CD4-positive, alpha-beta T cell (primary cell): ENCODE measurements at regions of chr3 and their contacts with region 1.

Region 1: GRCh38 chr3:66500576-66501482 is at the start of gene LRIG1:
- DNase-seq: peak; percentile 94 to 99 (median 98)
- ATAC-seq: peak; percentile 92
- H3K4me3 ChIP-seq: peak within 1 kb of the TSS; percentile 79
- H3K4me3 Mint-ChIP-seq: peak within 1 kb of the TSS; percentile 97
- H3K27ac ChIP-seq: peak within 1 kb of the TSS in 1 of 2 donors; percentile 11
- H3K27ac Mint-ChIP-seq: peak within 1 kb of the TSS; percentile 80
- H3K4me1 ChIP-seq: peaks cover 40% of the 10 kb centered on the region
- H3K4me1 Mint-ChIP-seq: peaks cover 69% of the 10 kb centered on the region
- H3K27me3 ChIP-seq: no peaks in the 10 kb centered on the region
- H3K27me3 Mint-ChIP-seq: no peaks in the 10 kb centered on the region
- CTCF ChIP-seq: peak; percentile 23
- total RNA-seq, gene LRIG1: 30.1 to 33.1 TPM

Region 2: GRCh38 chr3:66276705-66277274 is 224.0 kb before region 1 on chr3:
- CTCF ChIA-PET with region 1: no interaction called
- POLR2A ChIA-PET with region 1: no interaction called
- intact Hi-C with region 1: loop called in 1 of 2 experiments (anchors 10 kb)
- DNase-seq: peak; percentile 24 to 84 (median 53)
- ATAC-seq: peak; percentile 67
- H3K4me3 ChIP-seq: no peak overlapping the region
- H3K4me3 Mint-ChIP-seq: no peak overlapping the region
- H3K27ac ChIP-seq: no peak overlapping the region
- H3K27ac Mint-ChIP-seq: peak overlapping the region; percentile 17
- H3K4me1 ChIP-seq: no peaks in the 10 kb centered on the region
- H3K4me1 Mint-ChIP-seq: peaks cover 41% of the 10 kb centered on the region
- H3K27me3 ChIP-seq: no peaks in the 10 kb centered on the region
- H3K27me3 Mint-ChIP-seq: no peaks in the 10 kb centered on the region
- CTCF ChIP-seq: peak; percentile 90

Region 3: GRCh38 chr3:66407611-66408218 is 93.1 kb before region 1 on chr3:
- CTCF ChIA-PET with region 1: interaction called, 3 read pairs
- POLR2A ChIA-PET with region 1: no interaction called
- intact Hi-C with region 1: loop called (anchors 5 kb)
- DNase-seq: peak; percentile 56 to 82 (median 74)
- ATAC-seq: peak; percentile 86
- H3K4me3 ChIP-seq: no peak overlapping the region
- H3K4me3 Mint-ChIP-seq: no peak overlapping the region
- H3K27ac ChIP-seq: no peak overlapping the region
- H3K27ac Mint-ChIP-seq: no peak overlapping the region
- H3K4me1 ChIP-seq: peaks cover 3% of the 10 kb centered on the region
- H3K4me1 Mint-ChIP-seq: no peaks in the 10 kb centered on the region
- H3K27me3 ChIP-seq: no peaks in the 10 kb centered on the region
- H3K27me3 Mint-ChIP-seq: no peaks in the 10 kb centered on the region
- CTCF ChIP-seq: peak; percentile 90

Region 4: DNA sequence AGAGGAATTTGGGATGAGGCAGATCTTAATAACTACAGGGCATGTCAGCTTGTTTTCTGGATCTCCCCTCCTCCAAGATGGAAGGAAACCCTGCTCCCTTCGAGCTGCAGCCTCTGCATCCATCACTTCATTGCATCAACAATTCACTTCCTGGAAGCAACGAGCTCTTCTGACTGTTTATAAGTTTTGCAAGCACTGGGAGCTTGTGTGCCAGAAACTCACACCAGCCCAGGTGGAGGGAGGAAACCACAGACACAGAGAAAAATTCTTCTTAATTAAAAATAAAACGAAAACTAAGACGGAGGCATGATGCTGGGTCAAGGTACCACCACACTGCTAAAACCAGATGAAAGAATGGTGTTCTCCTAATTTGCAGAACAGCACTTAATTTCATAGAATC is 10.6 kb before region 1 on chr3:
- CTCF ChIA-PET with region 1: no interaction called
- POLR2A ChIA-PET with region 1: interaction called, 19 read pairs
- intact Hi-C with region 1: no loop called
- DNase-seq: peak in 4 of 14 experiments; percentile 38 to 71 (median 51)
- ATAC-seq: peak; percentile 52
- H3K4me3 ChIP-seq: peak overlapping the region; percentile 18
- H3K4me3 Mint-ChIP-seq: peak overlapping the region; percentile 79
- H3K27ac ChIP-seq: peak overlapping the region; percentile 37 to 38
- H3K27ac Mint-ChIP-seq: peak overlapping the region; percentile 84
- H3K4me1 ChIP-seq: peaks cover 64% of the 10 kb centered on the region
- H3K4me1 Mint-ChIP-seq: peaks cover 91% of the 10 kb centered on the region
- H3K27me3 ChIP-seq: no peaks in the 10 kb centered on the region
- H3K27me3 Mint-ChIP-seq: no peaks in the 10 kb centered on the region
- CTCF ChIP-seq: no peak